T-cell (primary cell): ENCODE measurements at regions of chr12 and their contacts with region 1.

Region 1: GRCh38 chr12:7571257-7571656 is 67.7 kb upstream of the CD163 start:
- DNase-seq: no peak
- ATAC-seq: no peak
- H3K4me3 ChIP-seq: no peak overlapping the region
- H3K4me3 Mint-ChIP-seq: no peak overlapping the region
- H3K27ac ChIP-seq: no peak overlapping the region
- H3K27ac Mint-ChIP-seq: no peak overlapping the region
- H3K4me1 ChIP-seq: no peaks in the 10 kb centered on the region
- H3K4me1 Mint-ChIP-seq: no peaks in the 10 kb centered on the region
- H3K27me3 ChIP-seq: peaks cover 0 to 9% of the 10 kb centered on the region in 2 experiments
- H3K27me3 Mint-ChIP-seq: peaks cover 25 to 27% of the 10 kb centered on the region in 2 donors

Region 2: GRCh38 chr12:7303230-7303629 is 268.0 kb before region 1 on chr12:
- CTCF ChIA-PET with region 1: no interaction called
- POLR2A ChIA-PET with region 1: interaction called in 1 of 2 experiments, 13 read pairs
- DNase-seq: no peak
- ATAC-seq: no peak
- H3K4me3 ChIP-seq: no peak overlapping the region
- H3K4me3 Mint-ChIP-seq: no peak overlapping the region
- H3K27ac ChIP-seq: no peak overlapping the region
- H3K27ac Mint-ChIP-seq: no peak overlapping the region
- H3K4me1 ChIP-seq: no peaks in the 10 kb centered on the region
- H3K4me1 Mint-ChIP-seq: no peaks in the 10 kb centered on the region
- H3K27me3 ChIP-seq: peaks cover 0 to 6% of the 10 kb centered on the region in 2 experiments
- H3K27me3 Mint-ChIP-seq: peaks cover 16 to 30% of the 10 kb centered on the region in 2 donors

Region 3: DNA sequence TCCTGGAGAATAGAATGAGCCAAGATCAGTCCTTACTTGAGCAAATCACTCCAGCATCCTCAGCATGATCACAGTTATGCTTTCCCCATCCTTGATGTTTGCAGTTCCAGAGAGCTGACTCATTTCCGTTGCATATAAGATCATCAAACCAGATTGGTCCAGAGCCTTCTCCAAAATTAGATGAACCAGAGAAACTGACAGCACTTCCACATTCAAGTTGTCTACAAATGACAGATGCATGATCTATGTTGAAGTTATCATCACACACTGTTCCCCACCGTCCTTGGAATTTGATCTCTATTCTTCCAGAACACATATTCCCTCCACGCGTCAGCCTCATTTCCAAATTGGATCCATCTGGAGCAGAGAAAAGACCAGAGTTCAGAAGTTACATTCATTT is 72.4 kb before region 1 on chr12:
- CTCF ChIA-PET with region 1: no interaction called
- POLR2A ChIA-PET with region 1: no interaction called
- DNase-seq: no peak
- ATAC-seq: no peak
- H3K4me3 ChIP-seq: no peak overlapping the region
- H3K4me3 Mint-ChIP-seq: no peak overlapping the region
- H3K27ac ChIP-seq: no peak overlapping the region
- H3K27ac Mint-ChIP-seq: no peak overlapping the region
- H3K4me1 ChIP-seq: no peaks in the 10 kb centered on the region
- H3K4me1 Mint-ChIP-seq: no peaks in the 10 kb centered on the region
- H3K27me3 ChIP-seq: no peaks in the 10 kb centered on the region
- H3K27me3 Mint-ChIP-seq: peaks cover 14 to 33% of the 10 kb centered on the region in 2 donors